AG04450 (cell line): ENCODE measurements at regions of chr1 and their contacts with region 1.

Region 1: GRCh38 chr1:212455803-212456528 is 23.2 kb downstream of the NENF start:
- DNase-seq: peak; percentile 72
- H3K4me3 ChIP-seq: peak overlapping the region; percentile 4; the same call in 1 of the 2 replicates
- H3K27ac ChIP-seq: no peak overlapping the region
- H3K27me3 ChIP-seq: no peaks in the 10 kb centered on the region
- CTCF ChIP-seq: peak; percentile 96

Region 2: GRCh38 chr1:211680752-211681327 is 775.1 kb before region 1 on chr1:
- CTCF ChIA-PET with region 1: interaction called, 48 read pairs
- POLR2A ChIA-PET with region 1: no interaction called
- DNase-seq: peak; percentile 79
- H3K4me3 ChIP-seq: no peak overlapping the region
- H3K27ac ChIP-seq: no peak overlapping the region
- H3K27me3 ChIP-seq: peaks cover 6% of the 10 kb centered on the region
- CTCF ChIP-seq: peak; percentile 78

Region 3: DNA sequence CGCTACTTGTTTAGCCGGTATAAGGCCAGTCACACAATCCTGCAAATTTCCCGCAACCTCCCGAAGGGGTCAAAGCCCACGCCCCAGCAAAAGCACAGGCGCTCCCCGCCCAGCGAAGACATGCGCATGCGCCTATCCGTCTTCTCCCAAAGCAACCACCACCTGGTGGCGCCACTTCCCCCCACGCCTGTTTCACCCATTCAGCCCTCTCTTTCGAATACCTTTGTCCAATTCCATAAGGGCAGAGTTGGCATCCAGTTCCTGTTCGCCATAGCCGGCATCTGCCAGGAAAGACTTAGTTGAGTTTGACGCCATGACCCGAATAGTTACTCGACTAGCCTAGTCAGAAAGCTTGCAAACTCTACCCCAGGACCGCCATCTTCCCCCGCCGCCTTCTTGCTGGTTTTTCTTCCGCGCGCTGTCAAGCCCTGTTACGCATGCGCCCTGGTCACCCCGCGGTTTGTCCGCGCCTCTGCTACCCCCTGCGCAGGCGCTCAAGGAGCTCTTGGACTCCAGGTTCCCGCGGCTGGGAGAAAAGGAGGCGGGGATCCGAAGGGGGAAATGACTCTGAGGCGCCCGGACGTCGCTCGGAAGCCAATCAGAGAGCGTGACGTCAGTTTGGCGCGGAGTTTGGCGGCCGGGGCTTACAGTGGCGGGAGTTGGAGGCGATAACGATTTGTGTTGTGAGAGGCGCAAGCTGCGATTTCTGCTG is 420.7 kb before region 1 on chr1 and contains the starts of genes DTL and INTS7:
- CTCF ChIA-PET with region 1: interaction called, 72 read pairs
- POLR2A ChIA-PET with region 1: no interaction called
- DNase-seq: peak; percentile 98
- H3K4me3 ChIP-seq: peak within 1 kb of the TSS; percentile 90
- H3K27ac ChIP-seq: peak within 1 kb of the TSS; percentile 59
- H3K27me3 ChIP-seq: no peaks in the 10 kb centered on the region
- CTCF ChIP-seq: peak; percentile 89
- polyA plus RNA-seq, gene DTL: 4.0 and 6.0 TPM in 2 replicates
- polyA plus RNA-seq, gene INTS7: 17.9 and 20.1 TPM in 2 replicates

Region 4: GRCh38 chr1:212355230-212355969 is 100.6 kb before region 1 on chr1:
- CTCF ChIA-PET with region 1: interaction called, 10 read pairs
- POLR2A ChIA-PET with region 1: no interaction called
- DNase-seq: no peak
- H3K4me3 ChIP-seq: no peak overlapping the region
- H3K27ac ChIP-seq: no peak overlapping the region
- H3K27me3 ChIP-seq: no peaks in the 10 kb centered on the region
- CTCF ChIP-seq: no peak

Region 5: DNA sequence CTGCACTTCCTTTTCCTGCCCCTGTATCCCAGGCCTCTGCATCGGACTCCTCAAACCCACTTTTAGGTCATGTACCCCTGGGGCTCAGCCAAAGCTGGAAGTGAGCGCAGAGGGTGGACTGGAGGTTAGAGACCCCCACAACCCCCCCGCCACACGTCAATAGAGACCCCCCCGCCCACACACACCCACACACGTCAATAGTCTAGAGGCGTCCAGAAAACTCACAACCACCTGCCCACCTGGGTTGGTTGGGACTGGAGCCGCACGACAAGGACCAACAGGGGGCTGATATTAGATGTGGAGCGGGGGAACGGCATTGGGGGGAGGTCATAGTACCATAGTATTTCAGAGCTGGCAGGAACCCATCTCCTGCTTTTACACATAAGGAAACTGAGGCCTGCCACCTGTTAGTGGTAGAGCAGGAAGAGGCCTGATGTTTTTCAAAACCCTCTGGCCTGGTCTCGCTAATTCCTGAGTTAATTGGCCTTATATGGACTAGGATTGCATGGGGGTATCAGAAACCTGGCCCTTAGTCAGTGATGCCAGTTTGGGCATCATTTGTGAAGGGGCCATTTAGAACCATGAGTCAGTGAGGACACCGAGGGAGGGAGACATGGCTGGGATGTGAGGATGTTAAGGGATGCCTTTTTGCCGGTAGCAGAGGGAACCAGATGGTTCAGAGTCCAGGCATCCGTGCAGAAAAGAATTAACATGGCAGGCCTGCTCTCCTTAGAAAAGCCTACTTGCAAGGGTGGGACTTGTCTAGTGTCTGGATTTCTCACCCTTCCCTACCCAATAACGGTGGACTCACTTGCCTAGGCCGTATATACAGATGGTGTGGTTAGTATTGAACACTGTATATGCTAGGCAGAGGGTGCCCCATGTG is 22.1 kb before region 1 on chr1:
- CTCF ChIA-PET with region 1: interaction called, 31 read pairs
- POLR2A ChIA-PET with region 1: no interaction called
- DNase-seq: no peak
- H3K4me3 ChIP-seq: peak overlapping the region; percentile 72
- H3K27ac ChIP-seq: no peak overlapping the region
- H3K27me3 ChIP-seq: no peaks in the 10 kb centered on the region
- CTCF ChIP-seq: no peak

Region 6: DNA sequence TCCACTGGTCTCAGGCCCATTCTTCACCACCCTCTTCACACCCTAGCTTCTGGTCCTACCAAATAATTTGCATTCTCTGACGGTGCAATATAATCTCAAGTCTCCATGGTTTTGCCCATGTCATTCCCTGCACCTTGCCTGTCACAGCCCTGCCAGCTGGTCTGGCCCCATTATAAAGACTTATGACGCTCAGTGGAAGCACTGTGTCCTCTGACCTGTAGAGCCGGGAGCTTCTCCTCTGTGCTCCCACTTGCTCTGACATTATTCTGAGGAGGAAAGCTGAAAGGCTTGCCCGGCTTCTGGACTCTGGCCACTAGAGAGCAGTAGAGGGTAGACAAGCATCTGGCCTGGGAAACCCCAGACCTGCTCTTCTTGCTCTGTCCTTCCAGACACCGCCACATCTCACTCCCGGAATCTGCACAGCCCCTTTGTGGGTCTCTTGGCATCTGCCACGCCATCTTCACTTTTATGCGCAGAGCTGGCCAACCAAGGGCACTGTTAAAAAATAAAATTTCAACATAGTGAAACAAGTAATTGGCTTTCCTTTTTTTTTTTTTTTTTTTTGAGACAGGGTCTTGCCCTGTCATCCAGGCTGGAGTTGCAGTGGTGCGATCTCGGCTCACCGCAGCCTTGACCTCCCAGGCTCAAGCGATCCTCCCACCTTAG is 21.2 kb after region 1 on chr1:
- CTCF ChIA-PET with region 1: interaction called, 113 read pairs
- POLR2A ChIA-PET with region 1: no interaction called
- DNase-seq: peak; percentile 71
- H3K4me3 ChIP-seq: no peak overlapping the region
- H3K27ac ChIP-seq: no peak overlapping the region
- H3K27me3 ChIP-seq: peaks cover 12% of the 10 kb centered on the region
- CTCF ChIP-seq: peak; percentile 97

Region 7: GRCh38 chr1:212621951-212622305 is 166.0 kb after region 1 on chr1:
- CTCF ChIA-PET with region 1: no interaction called
- POLR2A ChIA-PET with region 1: no interaction called
- DNase-seq: no peak
- H3K4me3 ChIP-seq: no peak overlapping the region
- H3K27ac ChIP-seq: no peak overlapping the region
- H3K27me3 ChIP-seq: peaks cover 10% of the 10 kb centered on the region
- CTCF ChIP-seq: no peak

Region 8: DNA sequence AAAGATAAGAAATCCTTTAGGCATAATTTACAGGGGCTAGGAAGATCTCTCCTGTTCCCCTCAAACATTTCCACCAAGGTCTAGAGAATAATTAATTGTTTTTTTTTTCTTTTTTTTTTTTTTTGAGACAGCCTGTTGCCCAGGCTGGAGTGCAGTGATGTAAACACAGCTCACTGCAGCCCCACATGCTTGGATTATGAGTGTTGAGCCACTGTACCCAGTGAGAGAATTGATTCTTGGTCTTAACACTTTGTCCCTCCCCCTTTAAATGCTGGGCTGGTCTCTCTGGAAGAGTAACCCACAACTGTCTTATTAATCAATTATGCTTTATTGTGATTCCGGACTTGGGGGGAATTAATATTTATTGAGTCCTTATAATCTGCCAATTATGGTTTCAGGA is 186.0 kb after region 1 on chr1:
- CTCF ChIA-PET with region 1: no interaction called
- POLR2A ChIA-PET with region 1: no interaction called
- DNase-seq: no peak
- H3K4me3 ChIP-seq: no peak overlapping the region
- H3K27ac ChIP-seq: no peak overlapping the region
- H3K27me3 ChIP-seq: peaks cover 11% of the 10 kb centered on the region
- CTCF ChIP-seq: no peak